ENCODE measurements at regions of chr1 and their contacts with region 1.

Region 1: DNA sequence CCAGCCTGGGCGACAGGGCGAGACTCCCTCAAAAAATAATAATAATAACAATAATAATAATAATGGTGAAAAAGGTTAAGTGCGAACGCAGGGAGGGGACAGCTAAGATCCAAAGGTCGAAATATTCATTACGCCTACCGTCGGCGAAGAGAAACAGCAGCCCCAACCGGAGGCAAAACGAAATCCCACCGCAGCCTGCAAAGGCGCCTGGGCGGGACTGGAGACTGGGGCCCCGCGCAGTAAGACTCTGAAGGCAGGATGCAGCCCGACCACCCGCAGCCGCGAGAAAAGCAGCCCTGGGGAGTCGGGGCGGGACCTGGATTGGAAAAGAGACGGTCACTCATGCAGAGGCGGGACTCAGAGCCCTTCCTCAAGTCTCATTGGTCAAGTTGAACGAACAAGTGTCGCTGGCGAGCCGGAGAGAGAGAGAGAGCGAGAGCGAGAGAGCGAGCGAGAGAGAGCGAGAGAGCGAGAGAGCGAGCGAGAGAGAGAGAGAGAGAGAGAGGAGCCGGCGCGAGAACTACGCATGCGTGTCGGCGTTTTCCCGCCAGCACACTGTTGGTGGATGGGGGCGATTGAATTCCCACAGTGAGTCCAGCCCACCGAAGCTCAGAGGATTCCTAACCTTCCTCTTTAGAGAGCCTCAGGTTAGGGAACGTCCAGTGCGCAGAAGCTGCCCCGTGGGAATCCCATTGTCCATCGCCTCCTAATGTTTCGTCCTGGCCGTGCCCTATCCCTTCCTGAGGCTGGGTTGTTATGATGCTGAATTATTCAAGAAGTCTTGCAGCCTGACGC is 10.7 kb downstream of the ENTREP3 start:
- DNase-seq: peak; percentile 99
- H3K4me3 Mint-ChIP-seq: peak overlapping the region; percentile 74
- H3K27ac Mint-ChIP-seq: peak overlapping the region; percentile 88
- H3K4me1 Mint-ChIP-seq: peaks cover 54% of the 10 kb centered on the region
- H3K27me3 Mint-ChIP-seq: peaks cover 2% of the 10 kb centered on the region

Region 2: DNA sequence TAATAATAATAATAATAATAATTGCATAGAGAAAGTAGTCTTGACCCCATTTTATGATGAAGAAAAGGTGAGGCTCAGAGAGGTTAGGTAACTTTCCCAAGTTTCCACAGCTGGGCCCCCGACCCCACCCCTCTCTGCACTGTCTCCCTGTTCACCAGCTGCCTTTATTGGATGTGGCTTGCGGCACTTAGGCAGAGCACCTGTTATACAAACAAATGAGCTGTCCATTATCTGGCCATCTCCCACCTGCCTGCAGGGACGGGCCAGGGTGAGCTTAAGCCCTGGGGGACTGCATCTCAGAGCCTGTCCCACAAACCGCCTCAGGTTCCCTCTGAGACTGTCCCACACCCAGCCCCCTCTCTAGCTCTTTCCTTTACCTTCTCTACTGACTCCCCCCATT is 126.9 kb before region 1 on chr1:
- CTCF ChIA-PET with region 1: no interaction called
- POLR2A ChIA-PET with region 1: no interaction called
- DNase-seq: no peak
- H3K4me3 Mint-ChIP-seq: no peak overlapping the region
- H3K27ac Mint-ChIP-seq: no peak overlapping the region
- H3K4me1 Mint-ChIP-seq: peaks cover 2% of the 10 kb centered on the region
- H3K27me3 Mint-ChIP-seq: peaks cover 36% of the 10 kb centered on the region

Region 3: DNA sequence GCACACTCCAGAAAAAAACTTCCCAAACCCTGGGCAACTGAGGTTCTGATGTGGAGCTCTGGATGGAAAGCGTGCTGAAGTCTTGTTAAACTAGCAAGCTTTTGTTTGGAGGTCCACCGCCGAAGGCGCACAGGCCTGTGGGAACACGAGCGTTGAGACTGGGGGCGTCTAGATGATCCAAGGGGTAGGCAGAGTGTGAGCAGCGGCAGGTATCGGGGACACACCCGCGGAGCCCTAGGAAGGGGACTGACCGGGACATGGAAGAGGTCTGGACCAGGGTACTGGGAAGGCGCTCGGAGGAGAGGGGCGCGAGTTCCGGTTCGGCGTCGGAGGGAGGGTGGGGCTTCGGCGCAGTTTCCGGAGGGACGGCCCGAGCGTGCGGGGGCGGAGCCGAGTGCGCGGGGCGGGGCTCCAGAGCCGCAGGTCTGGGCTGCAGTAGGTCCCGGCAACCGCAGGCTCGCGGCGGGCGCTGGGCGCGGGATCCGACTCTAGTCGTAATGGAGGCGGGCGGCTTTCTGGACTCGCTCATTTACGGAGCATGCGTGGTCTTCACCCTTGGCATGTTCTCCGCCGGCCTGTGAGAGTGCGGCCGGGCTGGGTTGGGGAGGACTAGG is 109.0 kb before region 1 on chr1 and contains the start of gene SLC50A1:
- CTCF ChIA-PET with region 1: no interaction called
- POLR2A ChIA-PET with region 1: no interaction called
- DNase-seq: peak; percentile 95
- H3K4me3 Mint-ChIP-seq: peak within 1 kb of the TSS; percentile 97
- H3K27ac Mint-ChIP-seq: peak within 1 kb of the TSS; percentile 98
- H3K4me1 Mint-ChIP-seq: peaks cover 49% of the 10 kb centered on the region
- H3K27me3 Mint-ChIP-seq: peaks cover 5% of the 10 kb centered on the region
- total RNA-seq, gene SLC50A1: 50.4 to 52.6 TPM

Region 4: GRCh38 chr1:155208541-155209311 is 35.8 kb before region 1 on chr1 and contains the start of gene MTX1:
- CTCF ChIA-PET with region 1: interaction called, 19 read pairs
- POLR2A ChIA-PET with region 1: interaction called, 42 read pairs
- DNase-seq: peak; percentile 89
- H3K4me3 Mint-ChIP-seq: peak within 1 kb of the TSS; percentile 85
- H3K27ac Mint-ChIP-seq: peak within 1 kb of the TSS; percentile 80
- H3K4me1 Mint-ChIP-seq: peaks cover 40% of the 10 kb centered on the region
- H3K27me3 Mint-ChIP-seq: no peaks in the 10 kb centered on the region
- total RNA-seq, gene MTX1: 41.2 to 43.1 TPM

Region 5: GRCh38 chr1:155256058-155256852 is 11.7 kb after region 1 on chr1:
- CTCF ChIA-PET with region 1: interaction called, 91 read pairs
- POLR2A ChIA-PET with region 1: interaction called, 26 read pairs
- DNase-seq: no peak
- H3K4me3 Mint-ChIP-seq: peak overlapping the region; percentile 72
- H3K27ac Mint-ChIP-seq: peak overlapping the region; percentile 17
- H3K4me1 Mint-ChIP-seq: peaks cover 47% of the 10 kb centered on the region
- H3K27me3 Mint-ChIP-seq: no peaks in the 10 kb centered on the region

Region 6: DNA sequence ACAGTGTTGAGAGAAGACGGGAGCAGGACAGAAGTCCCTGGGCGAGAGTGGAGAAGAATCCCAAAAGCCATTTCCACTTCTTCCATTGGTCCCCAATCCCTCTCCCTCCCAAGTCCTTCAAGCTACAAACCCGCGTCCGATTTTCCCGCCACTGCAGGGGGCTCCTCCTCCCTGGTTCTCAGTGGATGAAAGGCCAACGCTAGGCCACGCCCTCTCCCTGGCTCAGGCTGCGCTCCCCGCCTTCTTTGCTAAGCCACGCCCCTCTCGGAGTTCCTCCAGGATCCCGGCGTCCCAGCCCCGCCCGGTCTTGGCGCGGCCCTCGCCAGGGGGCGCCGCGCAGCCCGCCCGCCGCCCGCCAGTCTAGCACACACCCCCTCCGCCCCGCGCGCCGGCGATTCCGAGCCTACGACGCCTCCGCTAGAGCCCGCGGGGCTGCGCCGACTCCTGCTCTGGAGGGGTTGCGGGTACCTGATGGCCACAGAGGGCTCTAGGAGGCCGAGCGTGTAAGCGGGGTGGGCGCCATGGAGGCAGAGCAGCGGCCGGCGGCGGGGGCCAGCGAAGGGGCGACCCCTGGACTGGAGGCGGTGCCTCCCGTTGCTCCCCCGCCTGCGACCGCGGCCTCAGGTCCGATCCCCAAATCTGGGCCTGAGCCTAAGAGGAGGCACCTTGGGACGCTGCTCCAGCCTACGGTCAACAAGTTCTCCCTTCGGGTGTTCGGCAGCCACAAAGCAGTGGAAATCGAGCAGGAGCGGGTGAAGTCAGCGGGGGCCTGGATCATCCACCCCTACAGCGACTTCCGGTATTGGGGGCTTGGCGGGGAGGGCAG is 32.7 kb after region 1 on chr1 and contains the start of gene HCN3:
- CTCF ChIA-PET with region 1: interaction called, 29 read pairs
- POLR2A ChIA-PET with region 1: interaction called, 18 read pairs
- DNase-seq: peak; percentile 93
- H3K4me3 Mint-ChIP-seq: peak within 1 kb of the TSS; percentile 56
- H3K27ac Mint-ChIP-seq: no peak within 1 kb of the TSS
- H3K4me1 Mint-ChIP-seq: peaks cover 31% of the 10 kb centered on the region
- H3K27me3 Mint-ChIP-seq: peaks cover 4% of the 10 kb centered on the region
- total RNA-seq, gene HCN3: 3.7 to 4.9 TPM